ENCODE measurements at regions of chr3 and their contacts with region 1.

Region 1: GRCh38 chr3:54120657-54121413 is 1.5 kb upstream of the CACNA2D3 start:
- DNase-seq: no peak
- H3K4me3 ChIP-seq: peak overlapping the region; percentile 49 to 80 (median 60)
- H3K27ac ChIP-seq: no peak overlapping the region
- H3K4me1 ChIP-seq: peaks cover 4 to 13% of the 10 kb centered on the region in 2 donors
- H3K27me3 ChIP-seq: peaks cover 5 to 50% of the 10 kb centered on the region in 2 donors
- CTCF ChIP-seq: no peak
- POLR2A ChIP-seq: no peak

Region 2: GRCh38 chr3:54134713-54135112 is 13.9 kb after region 1 on chr3:
- intact Hi-C with region 1: loop called (anchors 1 kb)
- DNase-seq: no peak
- H3K4me3 ChIP-seq: no peak overlapping the region
- H3K27ac ChIP-seq: no peak overlapping the region
- H3K4me1 ChIP-seq: no peaks in the 10 kb centered on the region
- H3K27me3 ChIP-seq: no peaks in the 10 kb centered on the region
- CTCF ChIP-seq: no peak
- POLR2A ChIP-seq: no peak